PC-9 (cell line): ENCODE measurements at regions of chr16 and their contacts with region 1.

Region 1: DNA sequence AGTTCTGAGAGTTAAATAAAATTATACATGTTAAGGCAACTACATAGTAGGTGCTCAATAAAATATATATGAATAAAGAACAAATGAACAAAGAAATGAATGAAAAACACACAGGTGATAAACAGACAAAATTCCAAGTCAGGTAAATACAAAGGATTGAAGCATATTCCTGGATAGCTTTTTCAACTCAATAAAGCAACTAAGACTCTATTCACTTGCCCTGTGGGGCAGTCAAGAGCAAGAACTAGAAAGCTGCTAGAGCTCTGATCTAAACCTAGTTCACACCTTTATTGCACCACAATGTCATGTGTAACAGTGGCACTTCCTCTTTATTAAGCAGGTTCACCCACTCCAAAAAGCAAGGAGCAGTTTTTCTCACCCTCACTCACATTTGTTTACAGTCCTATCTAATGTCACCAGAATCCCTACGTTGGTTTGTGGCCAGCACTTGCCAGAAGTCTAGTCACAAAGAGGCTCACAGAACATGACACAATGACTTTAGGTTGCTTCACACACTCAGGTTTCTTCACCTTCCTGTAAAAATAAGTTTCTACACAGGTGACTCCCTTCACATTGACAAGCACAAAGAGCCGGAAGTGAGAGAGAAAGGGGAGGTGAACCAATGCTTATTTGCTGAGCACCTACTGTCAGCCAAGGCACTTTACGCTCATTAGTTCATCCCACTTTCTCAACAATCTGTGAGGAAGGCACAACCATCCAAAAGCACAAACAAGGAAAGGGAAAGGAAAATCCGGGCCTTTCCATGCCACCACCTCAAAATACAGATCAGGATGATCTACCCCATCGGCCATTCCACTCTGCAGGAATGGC is 70.8 kb downstream of the XPO6 start:
- DNase-seq: peak; percentile 10 to 92
- H3K4me3 ChIP-seq: no peak overlapping the region
- H3K27ac ChIP-seq: peak overlapping the region; percentile 87
- H3K4me1 ChIP-seq: peaks cover 31% of the 10 kb centered on the region
- H3K27me3 ChIP-seq: no peaks in the 10 kb centered on the region
- CTCF ChIP-seq: no peak

Region 2: DNA sequence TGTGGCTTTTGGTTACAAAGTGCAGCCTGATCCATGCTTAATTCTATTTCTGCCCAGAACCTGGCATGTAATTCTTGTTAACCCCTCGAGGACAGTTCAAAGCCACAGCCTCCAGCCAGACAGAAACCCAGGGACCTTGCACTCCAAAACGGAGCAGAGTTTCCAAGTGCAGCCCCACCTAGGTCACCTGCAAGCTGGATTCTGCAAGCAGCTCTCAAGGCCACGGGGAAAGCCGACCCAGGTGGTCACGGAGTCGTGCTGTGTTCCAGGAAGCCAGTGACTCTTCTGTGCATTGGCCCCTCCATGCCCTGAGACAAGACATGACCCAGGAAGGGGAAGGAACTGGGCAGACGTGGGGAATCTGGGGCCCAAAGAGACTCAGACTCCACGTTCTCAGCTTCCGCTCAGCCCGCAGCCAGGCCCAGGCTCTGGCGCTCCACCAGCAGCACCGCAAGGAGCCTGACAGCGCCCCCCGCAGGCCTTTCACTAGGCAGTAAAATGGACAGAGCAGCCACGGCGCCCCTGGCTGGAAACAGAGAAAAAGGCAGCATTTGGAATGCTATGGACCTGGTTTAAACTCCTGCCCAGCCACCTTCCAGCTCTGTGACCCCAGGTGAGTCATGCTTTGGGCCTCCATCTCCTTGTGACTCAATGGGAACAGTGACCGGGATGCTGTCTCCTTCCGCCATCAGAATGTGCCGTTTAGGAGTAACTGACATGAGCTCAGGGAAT is 50.2 kb before region 1 on chr16:
- CTCF ChIA-PET with region 1: no interaction called
- POLR2A ChIA-PET with region 1: no interaction called
- intact Hi-C with region 1: no loop called
- DNase-seq: peak; percentile 66 to 75
- H3K4me3 ChIP-seq: no peak overlapping the region
- H3K27ac ChIP-seq: peak overlapping the region; percentile 76
- H3K4me1 ChIP-seq: peaks cover 33% of the 10 kb centered on the region
- H3K27me3 ChIP-seq: no peaks in the 10 kb centered on the region
- CTCF ChIP-seq: peak; percentile 53; the same call in 1 of the 2 replicates

Region 3: DNA sequence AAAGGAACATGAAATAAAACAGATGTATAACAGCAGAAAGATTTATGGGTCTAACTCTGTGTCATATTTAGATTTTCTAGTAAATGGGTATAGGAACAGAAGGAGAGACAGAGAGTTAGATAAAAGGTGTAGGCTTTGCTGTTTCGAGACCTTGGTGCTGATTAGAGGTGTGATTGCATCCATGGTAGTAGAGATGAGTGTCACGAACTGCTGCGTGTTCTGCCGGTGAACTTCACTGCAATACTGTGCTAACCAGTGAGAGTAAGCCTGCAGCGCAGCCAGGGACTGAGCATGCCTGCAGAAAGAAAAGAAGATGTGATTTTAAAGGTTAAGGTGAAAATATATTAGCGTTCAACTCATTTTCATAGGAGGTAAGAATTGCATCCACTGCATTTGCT is 23.8 kb before region 1 on chr16:
- CTCF ChIA-PET with region 1: no interaction called
- POLR2A ChIA-PET with region 1: interaction called, 11 read pairs
- intact Hi-C with region 1: no loop called
- DNase-seq: no peak
- H3K4me3 ChIP-seq: no peak overlapping the region
- H3K27ac ChIP-seq: no peak overlapping the region
- H3K4me1 ChIP-seq: no peaks in the 10 kb centered on the region
- H3K27me3 ChIP-seq: no peaks in the 10 kb centered on the region
- CTCF ChIP-seq: no peak

Region 4: GRCh38 chr16:28181515-28181914 is 40.5 kb after region 1 on chr16:
- CTCF ChIA-PET with region 1: no interaction called
- POLR2A ChIA-PET with region 1: no interaction called
- intact Hi-C with region 1: no loop called
- DNase-seq: peak; percentile 59 to 81
- H3K4me3 ChIP-seq: no peak overlapping the region
- H3K27ac ChIP-seq: peak overlapping the region; percentile 41
- H3K4me1 ChIP-seq: peaks cover 30% of the 10 kb centered on the region
- H3K27me3 ChIP-seq: no peaks in the 10 kb centered on the region
- CTCF ChIP-seq: no peak